ENCODE measurements at regions of chr1 and their contacts with region 1.

Region 1: DNA sequence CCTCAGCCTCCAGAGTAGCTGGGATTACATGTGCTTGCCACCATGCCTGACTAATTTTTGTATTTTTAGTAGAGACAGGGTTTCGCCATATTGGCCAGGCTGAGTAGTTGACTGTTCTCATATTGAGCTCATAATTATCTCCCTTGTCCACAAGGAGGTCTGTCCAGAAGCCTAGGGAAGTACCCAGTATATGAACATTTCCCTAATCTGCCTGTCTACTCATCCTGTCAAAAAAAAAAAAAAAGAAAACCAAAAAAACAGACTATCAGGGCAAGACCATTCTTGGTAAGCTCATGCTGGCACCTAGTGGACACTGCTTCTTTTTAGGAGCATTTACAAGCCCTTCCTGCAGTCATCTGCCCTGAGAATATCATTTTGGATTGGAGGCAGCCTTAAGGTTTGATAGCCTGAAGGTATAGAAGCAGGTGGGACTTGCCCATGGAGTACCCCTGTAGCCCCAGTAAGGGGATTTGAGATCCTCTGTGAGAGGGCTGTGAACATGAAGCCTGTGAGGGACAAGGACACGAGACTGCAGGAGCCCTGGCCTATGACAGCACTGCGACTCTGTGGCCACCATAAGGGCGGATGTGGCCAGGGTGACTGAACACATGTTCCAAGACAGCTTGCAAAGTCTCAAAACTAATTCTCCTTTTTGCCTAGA is 10.8 kb upstream of the DUSP12 start:
- DNase-seq: peak; percentile 55
- ATAC-seq: peak; percentile 70
- H3K4me3 Mint-ChIP-seq: no peak overlapping the region
- H3K27ac Mint-ChIP-seq: peak overlapping the region; percentile 88
- H3K4me1 Mint-ChIP-seq: peaks cover 45% of the 10 kb centered on the region
- H3K27me3 Mint-ChIP-seq: no peaks in the 10 kb centered on the region
- CTCF ChIP-seq: no peak

Region 2: GRCh38 chr1:161314201-161314981 is 424.4 kb before region 1 on chr1 and contains the start of gene SDHC:
- CTCF ChIA-PET with region 1: no interaction called
- POLR2A ChIA-PET with region 1: interaction called, 10 read pairs
- intact Hi-C with region 1: no loop called
- DNase-seq: peak; percentile 83
- ATAC-seq: peak; percentile 97
- H3K4me3 Mint-ChIP-seq: peak within 1 kb of the TSS; percentile 98
- H3K27ac Mint-ChIP-seq: peak within 1 kb of the TSS; percentile 98
- H3K4me1 Mint-ChIP-seq: peaks cover 21% of the 10 kb centered on the region
- H3K27me3 Mint-ChIP-seq: no peaks in the 10 kb centered on the region
- CTCF ChIP-seq: no peak
- total RNA-seq, gene SDHC: 160 and 179 TPM in 2 replicates

Region 3: DNA sequence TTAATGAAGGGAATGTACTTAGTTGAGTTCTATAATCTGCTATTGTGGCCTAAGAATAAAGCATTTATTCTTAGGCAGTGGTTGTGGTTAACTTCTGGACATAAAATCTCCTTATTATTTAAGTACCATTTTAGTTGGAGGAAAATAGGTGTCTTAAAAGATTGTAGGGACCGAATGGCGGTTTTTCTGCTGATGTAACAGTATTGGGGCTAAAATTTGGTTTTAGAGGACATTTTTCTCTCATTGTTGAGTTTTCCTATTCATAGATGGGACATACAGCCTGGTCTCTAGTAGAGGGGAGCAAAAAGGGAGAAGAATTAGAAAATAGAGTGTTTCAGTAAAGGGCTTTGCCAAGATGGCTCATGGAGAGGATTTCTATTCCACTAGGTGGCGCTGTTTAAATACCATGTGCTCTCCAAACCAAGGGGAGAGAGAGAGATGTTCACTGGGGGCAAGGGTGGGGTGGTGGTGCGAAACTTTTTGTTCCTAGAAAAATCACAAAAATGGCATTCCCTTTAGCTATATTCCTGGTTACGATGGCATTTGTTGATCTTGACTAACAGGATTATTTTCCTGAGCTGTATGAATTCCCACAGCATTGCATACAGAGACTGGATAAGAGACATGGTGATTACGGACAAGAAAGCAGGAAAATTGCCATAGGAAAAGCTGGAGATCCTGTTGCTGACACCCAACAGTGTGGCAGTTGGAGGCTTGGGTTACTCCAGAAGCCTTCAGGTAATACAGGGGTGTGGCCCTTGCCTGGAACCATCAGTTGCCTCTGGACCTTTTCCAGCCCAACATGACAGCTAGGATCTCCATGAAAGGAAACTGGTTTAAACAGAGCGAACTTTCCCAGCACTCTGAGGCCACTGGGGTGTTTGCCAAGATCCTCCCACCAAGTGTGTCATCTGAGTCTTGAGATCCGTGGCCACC is 251.7 kb before region 1 on chr1:
- CTCF ChIA-PET with region 1: interaction called, 54 read pairs
- POLR2A ChIA-PET with region 1: interaction called, 8 read pairs
- intact Hi-C with region 1: loop called (anchors 1 kb)
- DNase-seq: no peak
- ATAC-seq: peak; percentile 54
- H3K4me3 Mint-ChIP-seq: no peak overlapping the region
- H3K27ac Mint-ChIP-seq: peak overlapping the region; percentile 26
- H3K4me1 Mint-ChIP-seq: peaks cover 4% of the 10 kb centered on the region
- H3K27me3 Mint-ChIP-seq: peaks cover 35% of the 10 kb centered on the region
- CTCF ChIP-seq: no peak

Region 4: DNA sequence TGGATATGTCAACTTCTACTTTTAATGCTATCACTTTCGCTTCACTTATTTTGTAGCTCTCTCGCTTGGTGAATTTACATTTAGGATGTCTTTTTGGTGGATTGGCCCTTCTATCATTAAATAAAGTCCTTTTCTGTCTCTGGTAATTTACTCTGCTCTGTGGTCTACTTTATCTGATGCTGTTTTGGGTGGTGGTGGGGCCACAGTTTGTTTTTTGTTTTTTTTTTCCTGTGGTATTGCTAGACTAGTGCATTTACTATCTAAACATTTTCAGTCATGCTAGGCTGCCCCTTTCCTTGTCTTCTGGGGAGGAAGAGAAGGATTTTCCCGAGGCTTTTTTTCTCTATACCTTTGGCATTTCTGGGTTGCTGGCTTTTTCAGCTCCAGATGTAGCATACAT is 49.8 kb before region 1 on chr1:
- CTCF ChIA-PET with region 1: no interaction called
- POLR2A ChIA-PET with region 1: no interaction called
- intact Hi-C with region 1: loop called (anchors 2 kb)
- DNase-seq: no peak
- ATAC-seq: no peak
- H3K4me3 Mint-ChIP-seq: no peak overlapping the region
- H3K27ac Mint-ChIP-seq: no peak overlapping the region
- H3K4me1 Mint-ChIP-seq: peaks cover 7% of the 10 kb centered on the region
- H3K27me3 Mint-ChIP-seq: no peaks in the 10 kb centered on the region
- CTCF ChIP-seq: no peak

Region 5: DNA sequence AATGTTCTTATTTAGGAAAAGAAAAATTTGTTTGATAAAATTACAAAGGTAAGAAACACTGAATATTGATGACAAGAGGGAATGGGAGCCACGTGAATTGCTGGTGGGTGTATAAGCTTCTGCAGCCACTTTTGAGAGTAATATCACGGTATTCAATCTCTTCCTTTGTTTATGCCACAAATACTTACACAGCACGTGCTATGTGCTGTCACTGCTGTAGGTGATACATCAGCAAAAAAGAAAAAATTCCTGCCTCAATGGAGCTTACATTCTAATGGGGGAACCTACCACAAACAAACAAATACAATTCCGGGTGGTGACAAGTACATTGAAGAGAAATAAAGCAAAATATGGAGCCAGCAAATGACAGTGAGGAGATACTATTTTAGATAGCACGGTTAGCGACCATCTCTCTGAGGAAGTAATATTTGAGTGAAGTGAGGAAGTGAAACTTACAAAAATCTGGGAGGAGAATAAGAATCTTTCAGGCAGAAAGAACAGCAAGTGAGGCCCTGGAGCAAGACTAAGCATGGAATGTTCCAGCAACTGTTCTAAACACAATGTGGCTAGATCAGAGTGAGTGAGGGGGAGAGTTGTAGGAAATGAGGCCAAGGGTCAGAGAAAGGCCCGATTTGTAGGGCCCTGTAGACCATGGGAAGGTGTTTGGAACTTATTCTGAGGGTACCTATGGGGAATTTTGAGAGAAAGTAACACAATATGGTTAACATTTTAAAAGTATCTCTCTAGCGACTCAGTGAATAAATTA is 20.0 kb before region 1 on chr1:
- CTCF ChIA-PET with region 1: interaction called, 4 read pairs
- POLR2A ChIA-PET with region 1: interaction called, 4 read pairs
- intact Hi-C with region 1: loop called (anchors 2 kb)
- DNase-seq: no peak
- ATAC-seq: peak; percentile 85
- H3K4me3 Mint-ChIP-seq: peak overlapping the region; percentile 63
- H3K27ac Mint-ChIP-seq: peak overlapping the region; percentile 90
- H3K4me1 Mint-ChIP-seq: peaks cover 68% of the 10 kb centered on the region
- H3K27me3 Mint-ChIP-seq: no peaks in the 10 kb centered on the region
- CTCF ChIP-seq: no peak

Region 6: DNA sequence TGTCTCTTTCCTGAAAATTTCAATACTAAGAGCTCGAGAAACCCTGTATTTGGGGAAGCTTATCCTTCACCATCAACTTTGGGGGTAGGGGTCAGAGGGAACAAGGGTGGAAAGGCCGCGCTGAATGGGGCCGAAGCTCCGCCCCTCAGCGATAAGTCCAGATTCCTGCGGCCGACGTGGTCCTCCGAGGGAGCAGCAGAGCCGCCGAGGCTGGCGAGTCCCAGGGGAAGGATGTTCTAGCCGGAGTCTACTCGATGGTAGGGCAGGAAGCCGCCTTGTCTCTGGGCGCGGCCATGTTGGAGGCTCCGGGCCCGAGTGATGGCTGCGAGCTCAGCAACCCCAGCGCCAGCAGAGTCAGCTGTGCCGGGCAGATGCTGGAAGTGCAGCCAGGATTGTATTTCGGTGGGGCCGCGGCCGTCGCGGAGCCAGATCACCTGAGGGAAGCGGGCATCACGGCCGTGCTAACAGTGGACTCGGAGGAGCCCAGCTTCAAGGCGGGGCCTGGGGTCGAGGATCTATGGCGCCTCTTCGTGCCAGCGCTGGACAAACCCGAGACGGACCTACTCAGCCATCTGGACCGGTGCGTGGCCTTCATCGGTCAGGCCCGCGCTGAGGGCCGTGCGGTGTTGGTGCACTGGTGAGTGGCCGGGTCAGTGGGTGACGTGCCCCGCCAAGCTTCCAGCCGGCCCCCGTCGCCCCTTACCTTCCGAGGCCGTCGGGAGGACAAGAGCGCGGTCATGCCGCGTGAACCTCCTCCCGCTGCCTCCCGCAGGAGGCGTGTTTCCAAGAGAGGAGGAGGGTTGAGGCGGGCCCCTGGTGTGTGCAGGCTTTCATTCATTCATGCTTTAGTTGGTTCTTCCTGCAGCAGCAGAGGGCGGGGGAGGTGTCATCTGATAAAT is 11.0 kb after region 1 on chr1 and contains the start of gene DUSP12:
- CTCF ChIA-PET with region 1: interaction called, 22 read pairs
- POLR2A ChIA-PET with region 1: interaction called, 26 read pairs
- intact Hi-C with region 1: loop called (anchors 1 kb)
- DNase-seq: peak; percentile 87
- ATAC-seq: peak; percentile 99
- H3K4me3 Mint-ChIP-seq: peak within 1 kb of the TSS; percentile 100
- H3K27ac Mint-ChIP-seq: peak within 1 kb of the TSS; percentile 96
- H3K4me1 Mint-ChIP-seq: peaks cover 35% of the 10 kb centered on the region
- H3K27me3 Mint-ChIP-seq: peaks cover 5% of the 10 kb centered on the region
- CTCF ChIP-seq: no peak
- total RNA-seq, gene DUSP12: 37.2 and 38.9 TPM in 2 replicates

Measured in activated B cell treated with CpG ODN at 0.5 μM for 24 hours (primary cell).